ENCODE measurements at regions of chrX and their contacts with region 1.

Region 1: DNA sequence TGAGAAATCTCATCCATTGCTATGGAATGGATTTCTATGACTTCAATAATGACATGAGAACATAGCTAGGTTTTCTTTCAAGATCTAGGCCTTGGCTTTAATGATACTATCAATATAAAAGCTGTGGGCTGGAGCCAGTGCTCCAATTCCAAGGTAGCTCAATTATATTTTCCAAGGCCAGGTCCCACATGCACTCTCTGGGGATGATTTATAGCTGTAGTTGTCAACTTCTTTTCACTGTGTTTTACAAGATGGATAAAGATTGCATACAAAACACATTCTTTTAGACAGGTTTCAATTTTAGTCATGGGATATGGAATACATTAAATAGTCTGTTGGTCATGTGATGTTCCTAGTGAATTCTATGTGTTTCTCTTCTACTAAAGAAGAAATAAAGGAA is 156.7 kb downstream of the DCAF12L1 start:
- DNase-seq: no peak
- H3K4me3 ChIP-seq: no peak overlapping the region
- H3K27ac ChIP-seq: no peak overlapping the region
- H3K4me1 ChIP-seq: no peaks in the 10 kb centered on the region
- H3K27me3 ChIP-seq: no peaks in the 10 kb centered on the region
- CTCF ChIP-seq: no peak

Region 2: DNA sequence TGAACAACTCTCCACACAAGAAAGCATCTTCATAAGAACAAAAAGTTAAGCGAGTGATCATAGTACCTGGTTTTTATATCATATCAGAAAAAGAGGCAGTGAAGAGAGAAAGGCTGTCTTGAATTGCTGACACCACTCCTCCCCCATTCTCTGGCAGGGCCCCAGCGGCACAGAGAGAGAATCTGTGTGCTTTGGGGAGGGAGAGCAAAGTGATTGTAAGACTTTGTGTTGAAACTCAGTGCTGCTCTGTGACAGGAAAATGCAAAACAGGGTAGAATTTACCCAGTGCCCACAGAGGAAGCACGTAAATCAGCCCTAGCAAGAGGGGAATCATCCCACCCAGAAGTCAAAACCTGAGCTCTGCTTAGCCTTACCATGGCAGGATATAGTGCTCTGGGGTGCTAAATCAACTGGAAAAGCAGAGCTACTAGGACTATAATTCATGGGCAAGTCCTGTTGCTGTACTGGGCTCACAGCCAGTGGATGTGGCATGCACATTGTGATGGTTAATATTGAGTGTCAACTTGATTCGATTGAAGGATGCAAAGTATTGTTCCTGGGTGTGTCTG is 598.2 kb after region 1 on chrX:
- intact Hi-C with region 1: no loop called
- DNase-seq: peak in 1 of 2 donors; percentile 18
- H3K4me3 ChIP-seq: no peak overlapping the region
- H3K27ac ChIP-seq: no peak overlapping the region
- H3K4me1 ChIP-seq: no peaks in the 10 kb centered on the region
- H3K27me3 ChIP-seq: no peaks in the 10 kb centered on the region
- CTCF ChIP-seq: no peak

Region 3: DNA sequence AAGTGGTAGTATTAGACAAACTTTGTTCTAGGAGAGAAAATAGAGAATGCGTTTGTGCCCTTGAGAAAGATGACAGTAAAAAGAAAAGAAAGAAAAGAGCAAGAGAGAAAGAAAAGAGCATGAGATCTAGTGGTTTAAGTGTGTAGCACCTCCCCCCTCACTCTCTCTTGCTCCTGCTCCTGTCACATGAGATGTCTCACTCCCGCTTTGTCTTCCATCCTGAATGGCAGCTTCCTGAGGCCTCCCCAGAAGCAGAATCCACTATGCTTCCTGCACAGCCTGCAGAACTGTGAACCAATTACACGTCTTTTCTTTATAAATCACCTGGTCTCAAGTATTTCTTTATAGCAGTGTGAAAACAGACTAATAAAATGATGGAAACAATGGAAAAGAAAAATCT is 1156.7 kb after region 1 on chrX:
- intact Hi-C with region 1: loop called (anchors 10 kb)
- DNase-seq: no peak
- H3K4me3 ChIP-seq: no peak overlapping the region
- H3K27ac ChIP-seq: no peak overlapping the region
- H3K4me1 ChIP-seq: no peaks in the 10 kb centered on the region
- H3K27me3 ChIP-seq: no peaks in the 10 kb centered on the region
- CTCF ChIP-seq: no peak